ENCODE measurements at regions of chr9 and their contacts with region 1.

Region 1: DNA sequence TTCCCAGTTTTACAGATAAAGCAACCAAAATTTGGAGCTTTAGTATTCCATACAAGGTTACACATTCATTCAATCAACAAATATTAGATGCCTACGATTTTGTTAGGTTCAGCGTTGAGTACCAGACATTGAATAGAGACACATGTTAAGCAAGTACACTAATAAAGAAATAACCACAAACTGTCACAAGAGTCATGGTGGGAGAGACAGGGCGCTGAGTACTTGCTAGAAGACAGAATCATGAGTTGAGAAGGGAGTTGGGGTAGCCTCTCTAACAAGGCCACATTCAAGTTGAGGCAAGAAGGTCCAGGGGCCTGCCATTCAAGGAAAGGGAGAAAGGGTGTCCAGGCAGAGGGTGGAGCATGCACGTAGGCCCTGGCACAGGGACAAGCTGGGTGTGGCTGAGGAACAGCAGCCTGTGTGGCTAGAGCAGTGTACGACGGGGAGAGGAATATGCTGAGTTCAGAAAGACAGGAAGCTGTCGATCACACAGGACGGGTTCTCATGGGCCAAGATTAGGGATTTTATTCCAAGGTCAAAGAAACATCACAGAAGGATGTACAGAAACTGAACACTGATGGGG is 17.0 kb downstream of the CDK5RAP2 start:
- DNase-seq: peak in 2 of 5 donors; percentile 45 to 54
- ATAC-seq: peak in 3 of 4 donors; percentile 44 to 71 (median 65)
- H3K4me3 ChIP-seq: no peak overlapping the region
- H3K27ac ChIP-seq: no peak overlapping the region
- H3K4me1 ChIP-seq: peaks cover 0 to 8% (median 0%) of the 10 kb centered on the region in 12 donors
- H3K27me3 ChIP-seq: no peaks in the 10 kb centered on the region
- CTCF ChIP-seq: no peak
- POLR2A ChIP-seq: no peak

Region 2: GRCh38 chr9:120505186-120505585 is 57.8 kb before region 1 on chr9:
- intact Hi-C with region 1: loop called in 1 of 10 experiments (anchors 10 kb)
- DNase-seq: no peak
- ATAC-seq: peak in 1 of 4 donors; percentile 47
- H3K4me3 ChIP-seq: no peak overlapping the region
- H3K27ac ChIP-seq: no peak overlapping the region
- H3K4me1 ChIP-seq: no peaks in the 10 kb centered on the region
- H3K27me3 ChIP-seq: no peaks in the 10 kb centered on the region
- CTCF ChIP-seq: peak in 2 of 12 donors; percentile 8 to 27
- POLR2A ChIP-seq: no peak

Region 3: DNA sequence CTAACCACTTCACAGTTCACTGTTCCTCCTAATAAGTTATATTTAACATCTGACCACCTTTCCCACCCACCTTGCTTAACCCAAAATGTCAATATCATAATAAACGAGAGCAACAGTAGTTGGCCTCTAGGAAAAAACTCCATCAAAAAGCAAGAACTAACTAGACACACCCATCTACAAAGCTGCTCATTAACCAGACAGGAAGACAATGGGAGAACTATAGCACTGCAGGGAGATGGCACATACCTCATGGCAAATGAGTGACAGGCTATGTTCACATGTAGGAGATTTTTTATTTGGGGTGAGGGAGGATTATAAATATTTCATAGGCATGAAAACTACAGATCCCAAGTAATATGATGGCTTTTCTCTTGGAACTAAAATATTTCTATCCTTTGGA is 40.6 kb after region 1 on chr9:
- intact Hi-C with region 1: no loop called
- DNase-seq: no peak
- ATAC-seq: no peak
- H3K4me3 ChIP-seq: no peak overlapping the region
- H3K27ac ChIP-seq: no peak overlapping the region
- H3K4me1 ChIP-seq: no peaks in the 10 kb centered on the region
- H3K27me3 ChIP-seq: no peaks in the 10 kb centered on the region
- CTCF ChIP-seq: no peak
- POLR2A ChIP-seq: no peak

Measured in heart left ventricle (tissue), 16 donors.